ENCODE measurements at regions of chr17 and their contacts with region 1.

Region 1: GRCh38 chr17:44070455-44071197 is at the start of gene G6PC3:
- DNase-seq: peak; percentile 97
- total RNA-seq, gene G6PC3: 33.6 TPM

Region 2: DNA sequence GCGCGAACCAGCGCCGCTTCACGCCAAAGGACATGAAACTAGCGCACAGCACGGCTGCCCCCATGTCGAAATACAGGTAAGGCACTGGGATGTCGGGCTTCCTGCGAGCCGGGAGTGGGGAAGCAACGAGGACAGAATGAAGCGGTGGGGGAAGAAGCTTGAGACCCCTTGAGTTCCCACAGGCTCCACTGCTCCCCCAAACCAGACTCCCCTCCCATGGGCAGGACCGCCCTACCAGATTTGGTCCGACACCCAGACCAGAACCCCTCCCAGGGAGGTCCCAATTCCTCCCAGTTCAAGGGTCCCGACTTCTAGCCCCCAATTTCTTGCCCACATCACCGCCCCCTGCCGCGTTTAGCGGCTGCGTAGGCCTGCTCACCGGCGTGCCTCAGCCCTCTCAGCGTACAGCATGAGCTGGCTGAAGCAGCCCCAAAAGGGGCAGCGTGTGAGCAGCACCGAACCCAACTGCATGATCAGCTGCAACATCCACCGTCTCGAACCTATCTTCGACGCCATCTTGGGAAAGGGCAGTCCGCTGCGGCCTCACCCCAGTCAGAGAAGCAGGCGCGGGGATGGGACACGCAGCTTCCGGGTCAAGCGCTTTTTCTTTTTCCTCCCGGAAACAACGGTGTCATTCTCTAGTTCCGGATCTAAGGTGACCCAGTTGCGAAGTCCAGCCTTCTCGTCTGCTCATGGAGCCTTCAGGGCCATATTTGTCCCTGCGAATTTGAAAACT is 56.0 kb before region 1 on chr17 and contains the start of gene TMEM101:
- intact Hi-C with region 1: loop called (anchors 5 kb)
- DNase-seq: peak; percentile 95
- total RNA-seq, gene TMEM101: 12.4 TPM

Region 3: DNA sequence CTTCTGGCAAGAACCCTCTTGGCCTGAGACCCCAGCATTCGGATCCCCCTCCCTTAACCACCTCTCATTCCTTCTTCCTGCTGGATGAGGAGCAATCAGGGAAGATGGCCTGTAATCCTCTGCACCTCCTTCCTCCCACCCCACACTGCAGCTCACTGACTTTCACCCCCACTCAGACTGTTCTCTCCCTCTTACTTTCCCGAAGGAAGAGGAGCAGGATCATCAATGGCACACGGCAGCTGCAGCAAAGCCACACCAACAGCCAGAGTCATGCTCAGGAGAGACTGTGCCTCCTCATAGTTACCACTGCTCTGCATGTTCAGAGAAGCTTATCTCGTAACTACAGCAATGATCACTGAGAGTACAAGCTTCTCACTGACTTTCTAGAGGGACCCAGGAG is 45.8 kb before region 1 on chr17:
- intact Hi-C with region 1: no loop called
- DNase-seq: no peak

Region 4: DNA sequence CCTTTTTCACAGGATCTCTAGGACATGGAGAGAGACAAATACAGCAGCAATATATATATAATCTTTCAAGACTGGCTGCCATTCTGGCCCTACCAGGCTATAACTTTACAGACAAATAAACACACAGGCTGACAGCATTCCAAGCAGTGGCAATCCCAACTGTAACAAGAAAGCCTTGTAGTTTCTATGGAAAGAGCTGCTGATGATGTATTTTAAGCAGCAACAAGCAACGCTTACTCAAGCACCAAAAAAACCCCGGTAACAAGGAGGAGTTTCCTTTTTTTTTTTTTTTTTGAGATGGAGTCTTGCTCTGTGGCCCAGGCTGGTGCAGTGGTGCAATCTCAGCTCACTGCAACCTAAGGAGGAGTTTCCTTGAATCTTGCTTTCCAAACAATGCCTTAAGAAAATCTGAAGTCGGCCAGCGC is 27.3 kb before region 1 on chr17:
- intact Hi-C with region 1: no loop called
- DNase-seq: no peak

Region 5: GRCh38 chr17:44095642-44096496 is 25.2 kb after region 1 on chr17:
- intact Hi-C with region 1: loop called (anchors 2 kb)
- DNase-seq: peak; percentile 84

Region 6: DNA sequence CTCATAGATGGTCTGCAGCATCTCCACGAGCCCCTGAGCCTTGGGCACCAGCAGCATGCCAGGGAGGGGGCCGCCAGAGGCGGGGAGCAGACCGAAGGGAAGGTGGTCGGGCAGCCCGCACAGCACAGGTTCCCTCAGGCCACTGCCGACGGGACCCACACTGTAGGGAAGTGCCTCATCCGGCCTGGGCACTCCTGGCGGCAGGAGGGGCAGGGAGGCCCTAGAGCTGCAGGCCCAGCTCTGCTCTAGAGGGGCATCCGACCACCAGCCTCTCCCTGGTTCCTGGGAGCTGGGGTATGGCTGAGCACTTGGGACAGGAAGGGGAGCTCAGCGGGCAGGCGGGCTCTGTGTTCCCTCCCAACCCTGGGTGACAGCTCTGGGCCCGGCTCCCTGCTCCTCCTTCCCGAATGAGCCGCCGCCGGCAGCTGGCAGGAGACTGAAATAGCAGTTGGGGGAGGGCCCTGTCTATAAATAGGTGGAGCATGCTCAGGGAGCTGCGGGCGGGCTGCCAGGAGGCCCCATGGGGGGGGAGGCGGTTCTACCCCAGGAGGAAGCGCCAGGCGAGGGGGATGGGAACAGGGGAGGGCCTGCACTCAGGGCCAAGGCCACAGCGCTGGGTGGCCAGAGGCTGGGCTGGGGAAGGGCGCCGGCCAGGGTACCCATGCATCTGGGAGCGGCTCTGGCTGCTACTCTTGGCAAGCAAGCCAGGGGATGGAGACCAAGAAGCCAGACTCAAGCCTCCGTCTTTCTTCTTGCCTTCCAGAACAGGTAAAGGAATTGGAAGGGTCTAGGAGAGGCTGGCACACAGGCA is 40.4 kb after region 1 on chr17:
- intact Hi-C with region 1: loop called (anchors 5 kb)
- DNase-seq: peak; percentile 98

Region 7: GRCh38 chr17:44123356-44124117 is 52.9 kb after region 1 on chr17 and contains the start of gene HDAC5:
- intact Hi-C with region 1: loop called (anchors 2 kb)
- DNase-seq: peak; percentile 99
- total RNA-seq, gene HDAC5: 75.5 TPM

Region 8: DNA sequence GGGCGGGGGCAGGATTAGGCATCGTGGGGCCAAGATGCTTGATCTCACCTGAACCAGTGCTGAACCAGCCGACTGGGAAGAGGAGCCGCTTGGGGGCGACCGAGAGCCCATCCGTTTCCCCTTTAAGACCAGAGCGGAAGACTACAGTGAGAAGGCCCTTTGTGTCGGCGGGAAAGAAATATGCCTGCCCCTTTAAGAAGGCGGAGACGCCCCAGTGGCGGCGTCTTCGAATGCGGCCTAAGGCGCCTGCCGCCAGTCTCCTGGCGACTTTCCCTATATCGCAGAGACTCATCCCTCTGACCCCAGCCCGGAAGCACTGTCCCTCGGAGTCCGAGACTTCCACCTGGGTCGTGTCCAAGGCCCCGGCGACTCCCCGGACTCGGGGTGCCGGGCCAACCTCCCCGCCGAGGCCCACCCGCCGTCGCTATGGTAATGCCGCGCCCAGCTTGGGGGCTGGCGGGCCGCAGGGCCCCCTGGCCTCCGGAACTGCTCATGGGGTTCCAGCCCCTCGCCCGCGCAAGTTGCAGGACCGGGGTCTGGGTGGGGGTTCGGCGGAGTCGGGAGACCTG is 71.2 kb after region 1 on chr17 and contains the start of gene HROB:
- intact Hi-C with region 1: loop called (anchors 5 kb)
- DNase-seq: peak; percentile 97
- total RNA-seq, gene HROB: 0.65 TPM

Measured in cardiac septum (tissue), 1 donor.